ENCODE measurements at regions of chr22 and their contacts with region 1.

Region 1: GRCh38 chr22:36384766-36385481 is 2.8 kb downstream of the MYH9 start:
- DNase-seq: peak in 1 of 4 donors; percentile 53
- ATAC-seq: no peak
- H3K4me3 ChIP-seq: peak overlapping the region in 1 of 2 donors; percentile 86
- H3K27ac ChIP-seq: peak overlapping the region; percentile 100
- H3K4me1 ChIP-seq: peaks cover 61% of the 10 kb centered on the region
- H3K27me3 ChIP-seq: no peaks in the 10 kb centered on the region
- CTCF ChIP-seq: peak in 1 of 7 experiments; percentile 24
- POLR2A ChIP-seq: peak in 1 of 3 donors; percentile 44

Region 2: DNA sequence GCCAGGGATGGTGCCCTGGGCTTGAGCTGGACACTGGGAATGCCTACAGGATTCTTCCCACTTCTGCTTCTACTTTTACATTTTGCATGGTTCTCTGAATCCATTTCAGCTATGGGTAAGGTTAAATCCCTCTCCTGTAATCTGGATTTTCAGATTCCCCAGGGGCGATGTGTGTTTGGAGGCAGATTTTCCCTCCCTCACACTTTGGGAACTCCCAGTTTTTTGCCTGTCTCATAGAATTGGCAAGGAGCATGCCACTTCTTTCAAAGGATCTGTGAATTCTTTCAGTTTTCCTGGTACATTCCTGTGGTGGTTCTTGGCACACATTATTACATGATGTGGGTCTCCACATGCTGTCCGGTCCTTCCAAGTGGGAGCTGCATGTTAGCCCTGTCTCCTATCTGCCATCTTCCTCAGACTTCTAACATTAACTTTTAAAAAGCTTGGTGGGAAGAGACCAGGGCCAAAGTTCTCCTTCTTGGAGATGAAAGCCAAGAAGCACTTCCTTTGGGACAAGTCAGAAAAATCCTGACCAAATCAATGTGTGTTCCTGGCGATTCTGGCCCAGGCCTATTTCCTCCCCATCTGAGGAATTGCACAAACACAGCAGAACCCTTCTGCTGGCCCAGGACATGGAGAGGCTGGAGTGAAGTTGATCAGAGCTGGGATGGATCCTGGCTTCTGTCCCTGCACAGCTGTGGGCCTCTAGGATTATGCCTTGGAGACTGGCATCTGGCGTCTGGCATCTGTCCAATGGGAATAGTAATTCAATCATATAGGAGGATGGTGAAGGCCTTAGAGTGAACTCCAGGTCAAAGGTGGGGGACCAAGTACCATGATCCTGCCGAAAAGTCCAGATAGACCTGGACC is 140.2 kb before region 1 on chr22:
- intact Hi-C with region 1: no loop called
- DNase-seq: peak in 1 of 4 donors; percentile 30
- ATAC-seq: peak; percentile 42
- H3K4me3 ChIP-seq: no peak overlapping the region
- H3K27ac ChIP-seq: no peak overlapping the region
- H3K4me1 ChIP-seq: peaks cover 2% of the 10 kb centered on the region
- H3K27me3 ChIP-seq: no peaks in the 10 kb centered on the region
- CTCF ChIP-seq: no peak
- POLR2A ChIP-seq: no peak

Region 3: DNA sequence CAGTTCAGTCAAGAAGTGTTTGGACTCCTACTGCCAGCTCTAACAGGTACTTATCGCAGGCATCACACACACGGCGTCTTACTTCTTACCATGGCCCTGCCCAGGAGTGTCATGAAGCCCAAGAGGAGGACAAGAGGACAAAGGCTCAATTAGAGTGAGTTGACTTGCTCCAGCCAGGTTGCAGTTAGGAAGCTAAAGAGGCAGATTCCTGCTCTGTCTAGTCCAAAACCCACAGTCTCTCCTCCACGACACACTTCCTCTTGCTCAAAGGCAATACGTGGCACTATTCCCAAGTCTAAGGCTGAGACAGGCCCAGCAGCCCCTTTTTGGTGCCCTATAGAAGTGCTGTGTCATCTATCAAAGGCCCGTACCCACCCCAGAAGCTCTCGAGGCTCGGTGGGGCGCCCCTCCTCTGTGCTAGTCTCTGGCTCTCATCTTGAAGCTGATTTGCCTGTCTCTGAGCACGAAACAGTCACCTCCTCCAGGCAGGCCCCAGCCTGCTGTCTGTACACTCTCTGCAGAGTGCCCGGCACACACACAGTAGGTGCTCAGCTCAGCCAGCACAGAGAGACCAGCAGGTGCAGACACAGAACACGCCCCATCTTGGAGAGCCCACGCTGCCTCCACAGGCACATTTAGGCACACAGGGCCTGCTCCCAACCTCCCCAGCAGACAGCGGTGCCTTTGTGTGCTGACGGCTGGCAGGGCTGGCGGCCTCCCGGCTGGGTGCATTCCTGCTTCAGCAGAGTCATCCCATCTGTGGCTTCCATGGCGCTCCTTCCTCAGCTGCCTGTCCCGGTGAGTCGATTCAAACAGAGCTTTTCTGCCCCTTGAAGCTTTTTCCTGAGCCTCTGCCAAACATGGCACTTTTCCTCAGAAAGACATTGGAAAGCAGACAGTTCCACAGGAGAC is 50.0 kb before region 1 on chr22:
- intact Hi-C with region 1: loop called (anchors 5 kb)
- DNase-seq: peak; percentile 62 to 78 (median 68)
- ATAC-seq: peak; percentile 29
- H3K4me3 ChIP-seq: no peak overlapping the region
- H3K27ac ChIP-seq: peak overlapping the region; percentile 84 to 96 (median 90)
- H3K4me1 ChIP-seq: peaks cover 83% of the 10 kb centered on the region
- H3K27me3 ChIP-seq: no peaks in the 10 kb centered on the region
- CTCF ChIP-seq: no peak
- POLR2A ChIP-seq: no peak